ENCODE measurements at regions of chr5 and their contacts with region 1.

Region 1: DNA sequence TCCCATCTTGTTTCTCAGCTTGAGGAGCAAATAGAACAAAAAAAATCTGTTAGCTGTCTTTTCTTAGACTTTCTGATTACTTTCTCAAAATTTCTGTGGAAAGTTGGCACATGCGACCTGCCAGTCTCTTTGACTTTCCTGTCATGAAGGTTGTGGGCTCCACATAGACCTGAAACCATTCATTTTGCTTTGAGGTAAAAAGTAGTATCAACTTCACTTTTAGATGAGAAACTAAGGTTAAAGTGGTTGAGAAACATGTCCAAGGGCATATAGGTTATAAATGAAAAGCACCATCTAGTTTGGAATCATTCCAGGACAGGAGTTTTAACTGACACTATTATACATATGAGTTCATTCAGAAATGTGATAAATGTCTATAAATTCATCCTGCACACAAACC is 42.7 kb downstream of the ST8SIA4 start:
- DNase-seq: no peak
- H3K4me3 ChIP-seq: no peak overlapping the region
- H3K27ac ChIP-seq: no peak overlapping the region
- H3K4me1 ChIP-seq: peaks cover 38% of the 10 kb centered on the region
- CTCF ChIP-seq: no peak

Region 2: DNA sequence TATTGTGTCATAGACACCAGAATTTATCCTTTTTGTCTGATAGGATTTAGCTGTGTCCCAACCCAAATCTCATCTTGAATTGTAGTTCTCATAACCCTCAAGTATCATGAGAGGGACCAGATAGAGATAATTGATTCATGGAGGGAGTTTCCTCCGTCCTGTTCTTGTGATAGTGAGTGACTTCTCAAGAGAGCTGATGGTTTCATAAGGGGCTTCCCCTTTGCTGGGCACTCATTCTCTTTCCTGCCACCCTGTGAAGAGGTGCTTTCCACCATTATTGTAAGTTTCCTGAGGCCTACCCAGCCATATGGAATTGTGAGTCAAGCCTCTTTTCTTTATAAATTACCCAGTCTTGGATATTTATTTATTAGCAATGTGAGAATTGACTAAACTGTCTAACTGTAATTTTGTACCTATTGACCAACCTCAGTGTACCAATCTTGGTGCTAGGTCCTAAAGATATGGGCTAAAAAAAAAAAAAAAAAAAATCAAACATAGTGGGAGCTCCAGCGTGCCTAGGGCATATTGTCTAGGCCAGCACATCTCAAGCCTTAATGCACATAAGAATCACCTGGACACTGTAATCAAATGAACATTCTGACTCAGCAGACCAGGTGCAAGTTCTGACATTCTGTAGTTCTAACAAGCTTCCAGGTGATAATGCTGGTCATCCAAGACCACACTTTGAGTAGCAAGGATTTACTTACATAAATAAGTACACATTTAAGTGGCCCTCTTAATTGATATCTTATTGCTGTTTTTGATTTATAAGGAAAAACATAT is 12.2 kb after region 1 on chr5:
- CTCF ChIA-PET with region 1: no interaction called
- POLR2A ChIA-PET with region 1: interaction called, 44 read pairs
- intact Hi-C with region 1: no loop called
- DNase-seq: no peak
- H3K4me3 ChIP-seq: no peak overlapping the region
- H3K27ac ChIP-seq: no peak overlapping the region
- H3K4me1 ChIP-seq: no peaks in the 10 kb centered on the region
- CTCF ChIP-seq: no peak

Measured in OCI-LY7 (cell line).